K562 (cell line): ENCODE measurements at regions of chr19 and their contacts with region 1.

Region 1: GRCh38 chr19:44113138-44113783 is at the start of gene ZNF225:
- DNase-seq: peak; percentile 90 to 98 (median 91)
- ATAC-seq: peak; percentile 99
- H3K4me3 ChIP-seq: peak within 1 kb of the TSS; percentile 91
- H3K27ac ChIP-seq: peak within 1 kb of the TSS; percentile 72
- H3K4me1 ChIP-seq: no peaks in the 10 kb centered on the region; a peak in 2 of 5 replicates
- H3K27me3 ChIP-seq: no peaks in the 10 kb centered on the region
- CTCF ChIP-seq: no peak
- EP300 ChIP-seq: no peak; the same call in 1 of the 2 replicates
- POLR2A ChIP-seq: peak; percentile 83
- RAD21 ChIP-seq: 0 out of 4 replicates have a peak, but pooled peaks of 1 of the 2 experiments have one; percentile 0
- polyA plus RNA-seq, gene ZNF225: 1.4 to 2.2 TPM

Region 2: DNA sequence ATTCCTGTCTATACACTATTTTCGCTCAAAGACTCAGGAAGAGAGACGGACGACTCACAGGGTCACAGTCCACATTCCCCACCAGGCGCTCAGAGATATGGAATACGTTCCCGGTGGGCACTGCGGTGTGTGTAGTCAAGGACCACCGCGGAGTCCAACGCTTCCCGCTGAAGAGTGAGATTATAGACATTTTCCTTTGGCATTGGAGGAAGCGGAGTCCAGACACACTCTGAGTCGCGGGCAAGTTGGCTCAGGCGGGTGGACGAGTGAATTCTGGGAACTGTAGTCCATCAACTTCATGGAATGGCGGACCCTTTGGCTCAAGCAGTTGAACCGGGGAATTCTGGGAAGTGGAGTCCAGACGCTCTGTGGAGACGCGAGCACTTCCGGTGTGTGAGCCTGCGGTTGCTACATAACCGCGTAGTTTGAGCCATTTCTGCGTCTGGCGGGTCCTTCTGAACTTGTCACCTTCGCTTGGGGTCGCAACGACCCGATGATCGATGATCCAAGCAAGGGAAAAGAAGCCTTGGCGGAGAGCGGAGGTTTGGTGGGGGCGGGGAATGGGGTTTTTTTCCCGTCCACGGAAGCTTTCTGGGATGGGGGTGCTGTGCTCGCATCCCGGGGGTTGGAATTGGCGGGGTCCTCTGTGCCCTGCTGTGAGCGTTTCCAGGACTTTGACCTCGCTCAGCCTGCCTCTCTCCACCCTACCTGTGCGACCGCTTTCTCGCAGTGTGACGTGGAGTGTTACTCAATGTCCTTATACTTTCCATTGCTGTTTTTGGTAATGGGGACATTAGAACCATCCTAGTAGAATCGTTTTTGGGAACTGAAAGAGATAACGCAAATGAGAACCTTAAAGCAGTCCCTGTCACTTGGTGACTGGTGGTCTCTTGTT is 110.4 kb before region 1 on chr19 and contains the start of gene ZNF230:
- CTCF ChIA-PET with region 1: no interaction called
- POLR2A ChIA-PET with region 1: no interaction called
- in situ Hi-C with region 1: no loop called
- intact Hi-C with region 1: loop called (anchors 10 kb)
- DNase-seq: peak; percentile 86 to 96 (median 89)
- ATAC-seq: peak; percentile 100
- H3K4me3 ChIP-seq: peak within 1 kb of the TSS; percentile 60
- H3K27ac ChIP-seq: peak within 1 kb of the TSS; percentile 60
- H3K4me1 ChIP-seq: peaks cover 0 to 4% of the 10 kb centered on the region in 2 experiments; a peak in 2 of 5 replicates
- H3K27me3 ChIP-seq: no peaks in the 10 kb centered on the region
- CTCF ChIP-seq: no peak; a peak in 1 of 6 replicates
- EP300 ChIP-seq: 0 out of 2 replicates have a peak, but pooled peaks have one; percentile 32
- POLR2A ChIP-seq: peak; percentile 74
- RAD21 ChIP-seq: no peak
- polyA plus RNA-seq, gene ZNF230: 2.0 TPM

Region 3: GRCh38 chr19:44093931-44094765 is 19.1 kb before region 1 on chr19 and contains the start of gene ZNF224:
- CTCF ChIA-PET with region 1: no interaction called
- POLR2A ChIA-PET with region 1: interaction called, 5 read pairs
- in situ Hi-C with region 1: no loop called
- intact Hi-C with region 1: loop called (anchors 1 kb)
- DNase-seq: peak; percentile 88 to 94 (median 88)
- ATAC-seq: peak; percentile 98
- H3K4me3 ChIP-seq: peak within 1 kb of the TSS; percentile 68
- H3K27ac ChIP-seq: peak within 1 kb of the TSS; percentile 74
- H3K4me1 ChIP-seq: no peaks in the 10 kb centered on the region; a peak in 1 of 5 replicates
- H3K27me3 ChIP-seq: no peaks in the 10 kb centered on the region
- CTCF ChIP-seq: 0 out of 6 replicates have a peak, but pooled peaks of 1 of the 3 experiments have one; percentile 3
- EP300 ChIP-seq: peak; percentile 63; the same call in 1 of the 2 replicates
- POLR2A ChIP-seq: peak; percentile 74
- RAD21 ChIP-seq: no peak
- polyA plus RNA-seq, gene ZNF224: 4.4 to 7.1 TPM